HAP-1 (cell line): ENCODE measurements at regions of chr3 and their contacts with region 1.

Region 1: GRCh38 chr3:3200632-3201212 is 21.2 kb upstream of the CRBN start:
- DNase-seq: peak; percentile 47 to 64
- H3K4me3 ChIP-seq: no peak overlapping the region
- H3K4me1 ChIP-seq: no peaks in the 10 kb centered on the region
- H3K27me3 ChIP-seq: 0 out of 2 replicates have a peak, but pooled peaks cover 2% of the 10 kb centered on the region

Region 2: DNA sequence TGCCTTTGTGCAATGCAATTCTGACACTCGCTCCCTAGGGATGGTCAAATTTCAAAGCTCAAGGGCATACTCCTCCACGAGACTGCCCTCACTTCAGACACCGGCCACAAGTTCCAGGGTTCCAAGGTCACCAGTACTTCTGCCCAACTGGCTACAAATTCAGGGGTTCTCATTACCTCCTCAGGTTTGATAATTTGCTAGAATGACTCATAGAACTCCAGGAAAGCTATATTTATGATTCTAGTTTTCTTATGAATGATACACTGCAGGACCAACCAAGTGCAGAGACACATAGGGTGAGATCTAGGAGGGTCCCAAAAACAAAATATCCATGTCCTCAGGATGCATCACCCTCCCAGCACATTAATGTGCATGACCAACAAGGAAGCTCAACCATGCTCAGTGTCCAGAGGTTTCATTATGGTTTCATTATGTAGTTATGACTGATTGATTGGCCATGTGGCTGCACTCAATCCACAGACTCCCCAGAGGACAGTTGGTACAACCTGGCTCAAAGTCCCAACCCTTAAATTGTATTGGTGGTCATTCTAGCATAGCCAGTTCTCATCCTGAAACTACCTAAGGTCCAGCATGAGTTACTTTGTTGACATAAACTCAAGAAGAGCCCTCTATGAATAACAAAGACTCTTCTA is 428.1 kb after region 1 on chr3:
- in situ Hi-C with region 1: no loop called
- DNase-seq: no peak
- H3K4me3 ChIP-seq: no peak overlapping the region
- H3K4me1 ChIP-seq: no peaks in the 10 kb centered on the region
- H3K27me3 ChIP-seq: no peaks in the 10 kb centered on the region

Region 3: DNA sequence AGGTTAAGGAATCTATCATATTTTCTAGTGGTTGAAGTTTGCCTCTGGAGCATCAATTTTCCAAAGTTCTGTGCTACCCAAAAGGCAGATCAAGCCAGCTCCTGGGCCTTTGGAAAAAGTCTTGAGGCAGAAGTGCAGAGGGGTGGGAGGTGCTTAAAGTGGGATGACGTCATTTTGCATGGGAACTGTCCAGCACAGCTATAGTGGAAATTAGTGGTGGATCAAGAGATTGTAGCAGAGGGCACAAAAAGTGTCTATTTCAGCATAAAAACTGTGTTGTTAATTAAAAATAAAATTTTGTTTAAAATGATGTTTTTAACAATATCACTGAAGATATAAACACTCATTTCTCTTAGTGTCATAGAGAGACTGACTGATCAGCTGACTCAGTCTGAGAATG is 820.4 kb after region 1 on chr3:
- in situ Hi-C with region 1: loop called (anchors 25 kb)
- DNase-seq: no peak
- H3K4me3 ChIP-seq: no peak overlapping the region
- H3K4me1 ChIP-seq: no peaks in the 10 kb centered on the region
- H3K27me3 ChIP-seq: no peaks in the 10 kb centered on the region